Activated CD8-positive, alpha-beta T cell treated with anti-CD3 and anti-CD28 coated beads for 36 hours (primary cell): ENCODE measurements at regions of chr12 and their contacts with region 1.

Region 1: DNA sequence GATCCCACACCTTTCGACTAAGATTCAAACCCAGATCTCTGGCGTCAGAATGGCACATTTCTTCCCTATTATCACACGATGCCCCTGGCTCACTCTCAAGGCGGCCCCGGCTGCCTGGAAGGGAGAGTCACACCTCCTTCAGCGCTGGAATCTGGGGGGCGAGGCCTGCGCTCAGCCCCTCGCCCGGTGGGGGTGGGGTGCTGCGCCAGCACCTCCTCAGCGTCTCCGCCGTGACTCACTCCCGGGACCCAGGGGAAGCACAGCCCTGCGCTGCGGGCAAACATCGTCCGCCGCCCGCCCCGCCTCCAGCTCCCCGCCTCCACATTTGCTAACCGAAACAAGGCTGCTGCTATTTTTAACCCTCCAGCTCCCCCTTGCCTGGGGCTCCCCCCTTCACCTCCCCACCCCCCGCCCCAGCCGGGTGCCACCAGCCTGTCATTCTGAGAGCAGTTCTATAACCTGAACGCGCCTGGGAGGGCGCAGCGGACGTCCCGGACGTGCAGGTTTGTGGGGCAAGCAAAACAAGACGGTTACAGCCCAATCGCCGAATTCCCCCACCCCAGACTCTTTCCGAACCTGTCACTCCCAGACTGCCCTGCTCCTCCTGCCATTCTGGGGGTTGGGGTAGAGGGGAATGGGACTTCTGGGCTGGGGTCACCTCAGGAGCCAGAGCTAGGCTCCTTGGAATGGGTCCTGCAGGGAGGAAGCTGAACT is 6.7 kb downstream of the HDAC7 start:
- DNase-seq: peak; percentile 98
- ATAC-seq: peak; percentile 68
- H3K4me3 Mint-ChIP-seq: peak overlapping the region; percentile 86
- H3K27ac Mint-ChIP-seq: peak overlapping the region; percentile 98
- H3K4me1 Mint-ChIP-seq: peaks cover 63% of the 10 kb centered on the region
- H3K27me3 Mint-ChIP-seq: no peaks in the 10 kb centered on the region
- CTCF ChIP-seq: no peak

Region 2: DNA sequence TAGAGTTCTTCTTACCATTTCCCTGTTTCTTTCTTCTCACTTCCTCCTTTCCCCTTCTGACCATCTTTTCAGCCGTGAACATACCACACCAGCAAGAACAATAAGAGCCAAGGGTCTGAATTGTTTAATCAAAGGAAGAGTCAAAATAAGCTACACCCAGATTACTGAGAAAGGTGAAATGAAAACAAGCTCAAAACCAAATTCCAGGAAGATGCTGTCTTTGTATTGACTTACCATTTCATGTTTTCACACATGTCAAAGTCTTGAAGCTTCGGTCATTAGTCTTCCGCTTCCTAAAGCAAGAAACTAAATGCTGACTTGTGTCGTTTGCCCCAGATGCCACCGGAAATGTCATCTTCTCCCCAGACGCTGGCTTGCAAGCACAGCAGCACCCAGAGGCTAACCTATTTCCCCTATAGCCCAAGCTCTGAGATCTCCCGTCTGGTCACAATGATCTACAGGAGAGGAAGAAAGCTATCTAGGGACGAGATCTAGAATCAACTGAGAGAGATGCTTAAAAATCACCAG is 596.7 kb before region 1 on chr12:
- CTCF ChIA-PET with region 1: no interaction called
- POLR2A ChIA-PET with region 1: no interaction called
- intact Hi-C with region 1: loop called (anchors 10 kb)
- DNase-seq: peak; percentile 87
- ATAC-seq: peak; percentile 52
- H3K4me3 Mint-ChIP-seq: peak overlapping the region; percentile 79
- H3K27ac Mint-ChIP-seq: peak overlapping the region; percentile 96
- H3K4me1 Mint-ChIP-seq: peaks cover 10% of the 10 kb centered on the region
- H3K27me3 Mint-ChIP-seq: no peaks in the 10 kb centered on the region
- CTCF ChIP-seq: no peak

Region 3: DNA sequence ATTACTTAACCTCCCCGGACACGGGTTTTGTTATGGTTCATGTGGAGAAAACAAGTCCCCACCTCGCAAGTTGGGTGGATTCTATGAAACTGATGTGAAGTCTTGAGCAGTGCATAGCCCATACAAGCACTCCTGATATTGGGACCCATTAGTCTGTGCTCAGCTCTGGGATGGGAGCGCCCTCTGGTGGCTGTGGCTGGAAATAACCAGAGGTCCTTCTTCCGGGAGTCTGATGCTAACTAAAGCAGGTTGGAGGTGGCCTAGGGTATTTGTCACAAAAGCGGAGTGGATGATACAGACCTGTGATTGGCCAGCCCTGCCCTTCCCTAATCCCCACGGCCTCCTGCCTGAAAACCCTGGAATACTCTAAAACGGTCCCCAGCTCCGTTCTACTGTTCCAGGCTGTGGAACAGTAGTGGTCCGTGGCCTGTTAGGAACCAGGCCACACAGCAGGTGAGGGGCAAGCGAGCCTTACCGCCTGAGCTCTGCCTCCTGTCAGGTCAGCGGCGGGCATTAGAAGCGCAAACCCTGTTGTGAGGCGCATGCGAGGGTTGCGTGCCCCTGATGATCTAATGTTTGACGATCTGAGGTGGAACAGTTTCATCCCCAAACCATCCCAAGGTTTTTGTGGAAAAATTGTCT is 33.5 kb before region 1 on chr12:
- CTCF ChIA-PET with region 1: interaction called, 33 read pairs
- POLR2A ChIA-PET with region 1: interaction called, 7 read pairs
- intact Hi-C with region 1: no loop called
- DNase-seq: peak; percentile 96
- ATAC-seq: peak; percentile 80
- H3K4me3 Mint-ChIP-seq: peak overlapping the region; percentile 7
- H3K27ac Mint-ChIP-seq: peak overlapping the region; percentile 18
- H3K4me1 Mint-ChIP-seq: peaks cover 31% of the 10 kb centered on the region
- H3K27me3 Mint-ChIP-seq: no peaks in the 10 kb centered on the region
- CTCF ChIP-seq: peak; percentile 89

Region 4: DNA sequence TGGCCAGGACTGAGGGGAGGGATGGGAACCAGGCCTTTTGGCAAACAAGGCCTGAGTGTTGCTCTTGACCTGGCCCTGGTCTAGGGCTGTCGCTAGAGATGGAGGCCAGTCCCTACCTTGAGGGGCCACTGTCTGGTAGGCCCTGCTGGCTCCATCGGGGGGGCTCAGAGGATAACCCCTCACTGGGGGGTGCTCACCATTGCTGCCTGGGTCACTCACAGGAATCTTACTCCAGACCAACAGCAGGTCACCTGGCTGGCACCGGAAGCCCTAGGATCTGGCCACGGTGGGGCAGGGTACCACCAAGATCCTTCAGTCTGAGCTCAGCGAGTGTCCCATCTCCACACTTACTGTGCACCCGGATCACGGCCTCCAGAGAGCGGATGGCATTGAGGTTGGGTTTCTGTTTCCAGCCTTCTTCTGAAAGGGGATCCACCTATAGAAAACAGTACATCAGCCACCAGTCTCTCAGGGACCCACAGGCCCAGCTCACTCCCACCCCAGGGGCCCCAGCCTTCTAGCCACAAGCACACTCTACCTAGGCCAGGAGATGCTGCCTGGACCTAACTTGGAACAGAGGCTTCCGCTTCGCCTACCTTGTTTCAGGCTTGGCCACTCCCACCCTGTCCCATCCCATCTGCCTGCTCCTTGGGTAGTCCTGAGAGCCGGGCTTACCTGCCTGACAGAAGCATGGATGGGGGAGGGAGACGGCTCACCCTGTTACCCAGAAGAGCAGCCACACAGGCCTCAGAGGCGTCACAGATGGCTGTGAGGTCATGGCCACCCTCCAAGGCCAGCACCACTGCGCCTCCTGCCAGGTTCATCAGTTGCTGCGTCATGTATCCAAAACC is 27.7 kb before region 1 on chr12:
- CTCF ChIA-PET with region 1: interaction called, 33 read pairs
- POLR2A ChIA-PET with region 1: interaction called, 8 read pairs
- intact Hi-C with region 1: no loop called
- DNase-seq: no peak
- ATAC-seq: peak; percentile 3
- H3K4me3 Mint-ChIP-seq: no peak overlapping the region
- H3K27ac Mint-ChIP-seq: peak overlapping the region; percentile 80
- H3K4me1 Mint-ChIP-seq: peaks cover 35% of the 10 kb centered on the region
- H3K27me3 Mint-ChIP-seq: no peaks in the 10 kb centered on the region
- CTCF ChIP-seq: no peak

Region 5: GRCh38 chr12:47797441-47797840 is 15.5 kb before region 1 on chr12:
- CTCF ChIA-PET with region 1: interaction called, 18 read pairs
- POLR2A ChIA-PET with region 1: interaction called, 18 read pairs
- intact Hi-C with region 1: no loop called
- DNase-seq: peak; percentile 56
- ATAC-seq: peak; percentile 57
- H3K4me3 Mint-ChIP-seq: no peak overlapping the region
- H3K27ac Mint-ChIP-seq: peak overlapping the region; percentile 46
- H3K4me1 Mint-ChIP-seq: peaks cover 41% of the 10 kb centered on the region
- H3K27me3 Mint-ChIP-seq: no peaks in the 10 kb centered on the region
- CTCF ChIP-seq: peak; percentile 19

Region 6: DNA sequence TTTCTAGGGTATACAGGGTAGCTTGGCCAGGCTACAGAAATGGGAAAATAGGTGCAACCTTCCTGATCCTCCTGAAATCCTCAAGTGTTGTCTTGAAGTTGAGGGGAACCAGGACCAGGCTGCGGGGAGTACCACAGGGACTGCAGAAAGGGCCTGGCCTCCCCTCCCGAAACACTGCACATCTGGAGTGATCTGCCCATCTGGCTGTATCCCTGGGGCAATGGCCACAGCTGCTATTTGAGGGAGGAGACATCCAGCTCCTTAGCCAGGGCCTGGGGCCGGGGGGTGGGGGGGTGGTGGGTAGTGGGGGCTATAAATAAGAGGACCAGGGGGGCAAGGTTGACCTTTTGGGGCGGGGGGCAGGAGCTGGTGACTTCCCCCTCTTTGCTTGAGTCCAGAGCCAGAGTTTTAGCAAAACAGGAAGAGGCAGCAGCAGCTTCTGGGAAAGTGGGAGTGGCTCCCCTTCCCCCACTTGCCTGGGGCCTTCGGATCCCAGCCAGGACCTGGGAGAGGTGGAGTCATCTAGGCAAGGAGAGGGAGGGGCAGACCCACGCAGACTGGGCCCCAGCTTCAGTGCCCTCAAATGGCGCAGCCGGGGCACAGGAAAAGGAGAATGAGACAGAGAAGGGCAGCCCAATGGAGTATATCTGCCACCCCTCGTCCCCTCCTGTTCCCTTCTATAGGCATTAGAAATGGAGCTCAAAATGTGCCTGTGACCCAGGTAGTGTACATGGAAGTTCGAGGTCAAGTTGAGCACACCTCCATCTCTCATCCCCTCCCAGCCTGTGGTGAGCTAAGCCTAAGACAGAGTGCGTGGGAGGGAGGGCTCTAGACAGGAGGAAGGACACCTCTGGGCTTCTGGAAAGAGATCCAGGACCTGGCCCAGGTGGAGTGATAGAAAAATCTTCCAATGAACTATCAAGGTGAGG is 15.9 kb after region 1 on chr12:
- CTCF ChIA-PET with region 1: interaction called, 624 read pairs
- POLR2A ChIA-PET with region 1: interaction called, 904 read pairs
- intact Hi-C with region 1: loop called (anchors 1 kb)
- DNase-seq: no peak
- ATAC-seq: no peak
- H3K4me3 Mint-ChIP-seq: peak overlapping the region; percentile 56
- H3K27ac Mint-ChIP-seq: peak overlapping the region; percentile 84
- H3K4me1 Mint-ChIP-seq: peaks cover 89% of the 10 kb centered on the region
- H3K27me3 Mint-ChIP-seq: no peaks in the 10 kb centered on the region
- CTCF ChIP-seq: no peak

Region 7: GRCh38 chr12:47882781-47883546 is 70.0 kb after region 1 on chr12:
- CTCF ChIA-PET with region 1: interaction called, 9 read pairs
- POLR2A ChIA-PET with region 1: interaction called, 4 read pairs
- intact Hi-C with region 1: loop called (anchors 5 kb)
- DNase-seq: peak; percentile 78
- ATAC-seq: peak; percentile 17
- H3K4me3 Mint-ChIP-seq: peak overlapping the region; percentile 76
- H3K27ac Mint-ChIP-seq: peak overlapping the region; percentile 96
- H3K4me1 Mint-ChIP-seq: peaks cover 74% of the 10 kb centered on the region
- H3K27me3 Mint-ChIP-seq: no peaks in the 10 kb centered on the region
- CTCF ChIP-seq: no peak